ENCODE measurements at regions of chrX and their contacts with region 1.

Region 1: DNA sequence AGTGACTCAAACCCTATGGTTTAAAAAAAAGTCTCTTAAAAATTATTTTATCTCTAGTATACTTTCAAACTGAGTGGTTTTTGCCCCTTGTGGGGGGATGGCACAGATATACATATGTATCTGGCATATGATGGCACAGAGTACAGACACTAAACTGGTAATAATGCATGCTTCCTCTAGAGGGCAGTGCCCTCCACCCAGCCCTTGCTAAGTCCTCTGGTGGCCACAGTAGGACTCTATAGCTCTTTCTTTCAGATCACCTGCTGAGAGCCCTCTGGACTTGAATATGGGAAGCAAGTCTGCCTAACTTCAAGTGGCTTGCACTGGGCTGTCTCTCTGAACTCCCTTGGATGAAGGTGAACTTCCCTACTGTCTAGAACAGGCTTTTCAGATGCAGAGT is 66.3 kb downstream of the TSPAN7 start:
- DNase-seq: peak; percentile 21 to 35
- H3K4me3 ChIP-seq: no peak overlapping the region
- H3K4me3 Mint-ChIP-seq: no peak overlapping the region
- H3K27ac Mint-ChIP-seq: no peak overlapping the region
- H3K4me1 ChIP-seq: no peaks in the 10 kb centered on the region
- H3K4me1 Mint-ChIP-seq: no peaks in the 10 kb centered on the region
- H3K27me3 ChIP-seq: no peaks in the 10 kb centered on the region
- H3K27me3 Mint-ChIP-seq: peaks cover 6% of the 10 kb centered on the region
- CTCF ChIP-seq: peak; percentile 52 to 76

Region 2: DNA sequence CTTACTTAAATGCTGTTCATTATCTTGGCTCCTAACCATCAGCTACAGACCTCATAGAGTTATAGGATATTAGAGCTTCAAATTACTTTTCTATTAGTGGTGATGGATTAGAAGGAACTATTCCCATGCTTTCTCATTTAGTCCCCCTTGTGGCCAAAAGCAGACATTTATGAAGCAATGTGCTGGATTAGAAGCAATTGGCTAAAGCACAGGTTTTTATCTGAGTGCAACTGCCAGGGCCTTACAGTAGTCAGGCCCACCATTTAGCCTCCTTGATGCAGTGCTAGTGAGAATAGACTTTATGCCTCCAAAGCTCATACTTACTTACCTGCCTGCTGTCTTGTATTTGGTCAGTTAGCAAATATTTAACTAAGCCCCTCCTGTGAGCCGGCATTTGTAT is 26.6 kb after region 1 on chrX:
- CTCF ChIA-PET with region 1: interaction called, 4 read pairs
- POLR2A ChIA-PET with region 1: no interaction called
- intact Hi-C with region 1: loop called (anchors 1 kb)
- DNase-seq: peak in 1 of 2 experiments; percentile 32
- H3K4me3 ChIP-seq: no peak overlapping the region
- H3K4me3 Mint-ChIP-seq: no peak overlapping the region
- H3K27ac Mint-ChIP-seq: no peak overlapping the region
- H3K4me1 ChIP-seq: no peaks in the 10 kb centered on the region
- H3K4me1 Mint-ChIP-seq: peaks cover 8% of the 10 kb centered on the region
- H3K27me3 ChIP-seq: no peaks in the 10 kb centered on the region
- H3K27me3 Mint-ChIP-seq: no peaks in the 10 kb centered on the region
- CTCF ChIP-seq: peak; percentile 20 to 23

Region 3: DNA sequence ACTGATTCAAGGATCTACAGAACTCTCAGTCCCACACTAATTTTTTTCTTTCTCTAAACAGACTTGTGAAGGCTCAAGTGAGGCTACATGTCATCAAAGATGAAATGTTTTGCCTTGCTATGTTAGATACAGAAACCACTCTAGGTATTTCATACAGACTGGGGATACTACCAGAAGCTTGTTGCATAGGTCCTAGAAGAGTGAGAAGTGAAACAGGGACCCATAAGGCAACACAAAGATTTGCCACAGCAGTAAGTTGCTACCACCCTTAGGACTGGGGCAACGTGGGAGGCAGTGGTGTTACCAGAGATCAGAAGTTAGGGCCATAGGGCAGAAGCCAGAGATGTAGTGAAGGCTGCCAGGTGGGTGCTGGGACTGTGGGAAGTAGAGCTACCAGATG is 122.9 kb after region 1 on chrX:
- CTCF ChIA-PET with region 1: no interaction called
- POLR2A ChIA-PET with region 1: no interaction called
- intact Hi-C with region 1: no loop called
- DNase-seq: no peak
- H3K4me3 ChIP-seq: no peak overlapping the region
- H3K4me3 Mint-ChIP-seq: no peak overlapping the region
- H3K27ac Mint-ChIP-seq: no peak overlapping the region
- H3K4me1 ChIP-seq: no peaks in the 10 kb centered on the region
- H3K4me1 Mint-ChIP-seq: no peaks in the 10 kb centered on the region
- H3K27me3 ChIP-seq: no peaks in the 10 kb centered on the region
- H3K27me3 Mint-ChIP-seq: peaks cover 6% of the 10 kb centered on the region
- CTCF ChIP-seq: no peak